Panc1 (cell line): ENCODE measurements at regions of chr2 and their contacts with region 1.

Region 1: DNA sequence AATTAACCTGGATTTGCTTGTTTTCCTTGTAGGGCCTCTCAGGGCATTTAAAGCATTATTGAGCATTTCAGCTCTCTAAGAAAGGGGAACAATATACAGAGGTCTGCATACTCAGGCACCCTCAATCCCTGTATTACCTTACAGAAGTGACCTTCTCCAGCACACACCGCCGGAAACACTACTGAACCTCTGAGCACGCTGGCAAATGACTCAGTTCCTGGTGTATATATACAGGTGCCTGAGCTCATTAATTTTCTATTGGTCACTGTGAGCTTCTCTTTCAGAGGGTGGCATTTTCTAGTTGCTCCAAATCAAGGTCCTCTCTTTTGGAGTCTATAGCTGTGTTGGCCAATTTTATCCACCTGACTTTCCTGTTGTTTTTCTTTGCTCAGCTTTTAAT is 85.2 kb upstream of the COPS8 start:
- DNase-seq: no peak
- ATAC-seq: no peak
- H3K4me3 ChIP-seq: no peak overlapping the region
- H3K27ac ChIP-seq: no peak overlapping the region
- H3K4me1 ChIP-seq: no peaks in the 10 kb centered on the region
- H3K27me3 ChIP-seq: peaks cover 13% of the 10 kb centered on the region
- CTCF ChIP-seq: no peak

Region 2: GRCh38 chr2:236338495-236339184 is 661.8 kb before region 1 on chr2:
- CTCF ChIA-PET with region 1: no interaction called
- POLR2A ChIA-PET with region 1: interaction called, 13 read pairs
- in situ Hi-C with region 1: no loop called
- intact Hi-C with region 1: no loop called
- DNase-seq: no peak
- ATAC-seq: no peak
- H3K4me3 ChIP-seq: no peak overlapping the region
- H3K27ac ChIP-seq: no peak overlapping the region
- H3K4me1 ChIP-seq: no peaks in the 10 kb centered on the region
- H3K27me3 ChIP-seq: no peaks in the 10 kb centered on the region
- CTCF ChIP-seq: no peak

Region 3: DNA sequence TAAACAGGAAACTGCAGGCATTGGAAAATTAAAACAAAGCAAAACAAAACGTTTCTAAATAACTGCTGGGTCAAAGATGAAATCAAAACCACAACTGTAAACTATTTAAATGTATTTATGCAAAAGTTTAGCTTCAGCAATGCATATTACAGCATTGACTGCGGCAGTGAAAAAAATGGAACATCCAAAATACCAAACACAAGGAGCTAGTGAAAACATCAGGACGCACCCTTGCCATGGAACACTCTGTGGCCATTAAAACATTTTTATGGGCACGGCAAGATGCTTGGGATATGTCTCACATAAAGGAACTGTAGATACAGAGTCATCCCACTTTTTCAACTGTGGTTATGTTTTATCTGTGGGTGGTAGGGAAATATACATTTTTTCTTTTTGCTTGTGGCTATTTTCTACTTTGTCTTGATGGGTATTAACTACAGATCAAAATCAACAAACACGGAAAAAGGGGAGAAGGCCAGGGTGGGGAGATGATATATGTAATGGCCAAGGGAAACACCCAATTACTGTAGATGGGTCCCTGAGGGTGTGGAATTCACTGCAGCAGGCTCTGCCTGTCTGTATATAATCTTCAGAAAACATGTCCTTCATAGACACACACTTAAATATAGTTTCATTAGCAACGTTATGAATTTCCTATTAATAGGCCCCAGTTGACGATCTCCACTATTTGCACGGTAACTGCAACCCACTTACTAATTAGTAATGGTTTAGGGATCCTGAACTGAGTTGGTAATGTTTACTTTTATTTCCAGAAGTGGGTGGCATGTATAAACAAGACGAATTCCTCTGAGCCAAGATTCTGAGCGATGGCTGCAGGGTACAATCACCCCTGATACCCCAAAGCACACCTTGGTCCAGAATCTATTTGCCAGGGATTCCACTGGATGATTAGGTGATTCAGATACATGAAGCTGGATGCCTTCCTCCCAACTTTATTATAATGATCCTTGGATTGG is 320.3 kb before region 1 on chr2:
- CTCF ChIA-PET with region 1: no interaction called
- POLR2A ChIA-PET with region 1: no interaction called
- in situ Hi-C with region 1: no loop called
- intact Hi-C with region 1: no loop called
- DNase-seq: no peak
- ATAC-seq: no peak
- H3K4me3 ChIP-seq: no peak overlapping the region
- H3K27ac ChIP-seq: no peak overlapping the region
- H3K4me1 ChIP-seq: no peaks in the 10 kb centered on the region
- H3K27me3 ChIP-seq: peaks cover 18% of the 10 kb centered on the region
- CTCF ChIP-seq: no peak